ENCODE measurements at regions of chr7 and their contacts with region 1.

Region 1: DNA sequence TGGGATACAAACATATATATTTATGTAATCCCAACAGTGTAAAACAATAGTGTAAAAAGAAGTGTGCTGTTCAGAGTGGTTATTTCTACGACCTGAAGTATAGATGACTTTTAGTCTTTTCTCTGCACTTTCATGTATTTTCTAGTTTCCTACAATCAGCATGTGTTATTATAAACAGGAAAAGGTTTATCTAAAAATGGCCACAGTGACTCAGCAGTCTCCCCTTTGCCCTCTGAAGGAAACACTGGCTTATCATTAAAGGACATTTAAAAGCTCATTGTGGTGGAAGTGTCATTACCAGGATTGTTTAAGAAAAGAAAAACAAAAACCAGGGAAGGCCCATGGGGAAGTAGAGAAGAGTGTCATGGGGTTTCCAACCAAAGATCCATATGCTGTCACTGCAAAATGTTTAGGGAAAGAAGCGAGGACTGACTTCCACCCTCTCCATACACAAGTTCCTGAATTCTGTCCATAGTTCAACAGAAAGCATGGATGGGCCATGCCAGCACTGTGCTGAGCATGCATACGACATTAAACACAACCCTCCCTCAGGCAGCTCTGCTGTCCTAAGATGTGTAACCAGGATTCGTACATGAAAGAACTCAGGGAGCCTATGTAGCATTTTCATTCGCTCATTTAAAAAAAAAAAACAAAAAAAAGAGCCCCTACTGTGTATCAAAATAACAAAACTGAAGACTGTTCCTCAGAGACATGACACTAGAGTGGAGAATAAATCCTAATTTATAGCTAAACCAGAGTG is 10.2 kb downstream of the CYREN start:
- DNase-seq: no peak
- H3K4me3 ChIP-seq: no peak overlapping the region
- H3K4me3 Mint-ChIP-seq: peak overlapping the region in 5 of 7 donors; percentile 13 to 59 (median 42)
- H3K27ac ChIP-seq: peak overlapping the region; percentile 74
- H3K27ac Mint-ChIP-seq: peak overlapping the region; percentile 13 to 92 (median 76)
- H3K4me1 ChIP-seq: peaks cover 42% of the 10 kb centered on the region
- H3K4me1 Mint-ChIP-seq: peaks cover 57 to 88% (median 79%) of the 10 kb centered on the region in 3 donors
- H3K27me3 ChIP-seq: no peaks in the 10 kb centered on the region
- H3K27me3 Mint-ChIP-seq: no peaks in the 10 kb centered on the region

Region 2: DNA sequence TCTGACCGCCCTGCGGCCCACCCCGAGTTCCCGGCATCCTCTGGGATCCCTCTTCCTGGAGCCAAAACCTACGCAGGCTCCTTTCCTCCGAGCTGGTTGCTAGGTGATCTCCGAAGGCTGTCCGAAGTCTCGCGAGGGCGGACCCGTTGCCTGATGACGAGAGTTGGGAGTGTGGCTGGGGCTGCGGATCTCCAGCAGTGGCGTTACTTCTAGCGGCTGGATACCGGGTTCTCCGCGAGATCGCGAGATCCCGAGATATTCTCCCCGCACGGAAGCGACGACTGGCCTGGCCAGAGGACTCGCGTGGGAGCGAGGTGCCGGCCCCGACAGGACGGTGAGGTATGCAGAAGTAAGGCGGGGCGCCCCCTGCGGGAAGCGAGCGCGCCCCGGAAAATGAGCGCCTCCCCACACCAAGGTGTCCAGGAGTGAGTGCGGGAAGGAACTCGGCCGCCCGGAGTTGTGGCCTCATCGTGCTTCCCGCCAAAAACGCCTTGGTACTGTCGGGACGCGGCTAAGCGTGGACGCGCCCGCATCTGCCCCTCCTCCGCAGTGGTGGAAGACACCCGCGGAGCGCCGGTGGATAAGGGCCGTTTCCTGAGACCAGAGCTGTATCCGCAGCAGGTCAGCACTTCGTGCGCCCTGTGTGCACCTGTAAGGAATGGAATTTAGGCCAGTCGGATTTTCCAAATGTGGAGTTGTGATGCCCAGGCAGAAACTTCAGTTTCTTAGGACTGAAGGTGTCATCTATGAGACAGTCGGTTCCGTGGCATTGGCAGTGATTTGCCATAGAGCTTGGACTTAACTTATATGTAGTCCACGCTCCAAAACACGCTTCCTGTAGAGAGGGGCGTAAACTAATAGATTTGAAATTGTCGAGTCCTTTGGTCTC is 173.7 kb before region 1 on chr7 and contains the start of gene AGBL3:
- CTCF ChIA-PET with region 1: interaction called, 11 read pairs
- POLR2A ChIA-PET with region 1: no interaction called
- DNase-seq: peak; percentile 77 to 95 (median 88)
- H3K4me3 ChIP-seq: peak within 1 kb of the TSS; percentile 98
- H3K4me3 Mint-ChIP-seq: peak within 1 kb of the TSS; percentile 94 to 99 (median 97)
- H3K27ac ChIP-seq: peak within 1 kb of the TSS; percentile 88
- H3K27ac Mint-ChIP-seq: peak within 1 kb of the TSS; percentile 92 to 100 (median 99)
- H3K4me1 ChIP-seq: peaks cover 17% of the 10 kb centered on the region
- H3K4me1 Mint-ChIP-seq: peaks cover 36 to 62% (median 57%) of the 10 kb centered on the region in 3 donors
- H3K27me3 ChIP-seq: no peaks in the 10 kb centered on the region
- H3K27me3 Mint-ChIP-seq: peaks cover 0 to 3% of the 10 kb centered on the region in 2 donors
- total RNA-seq, gene AGBL3: 2.5 to 3.2 TPM

Measured in CD8-positive, alpha-beta memory T cell (primary cell).